MCF 10A (cell line): ENCODE measurements at regions of chr4 and their contacts with region 1.

Region 1: GRCh38 chr4:77385124-77385969 is 220.3 kb upstream of the CXCL13 start:
- DNase-seq: peak; percentile 77
- H3K4me3 Mint-ChIP-seq: no peak overlapping the region
- H3K27ac Mint-ChIP-seq: no peak overlapping the region
- H3K4me1 Mint-ChIP-seq: no peaks in the 10 kb centered on the region
- H3K27me3 Mint-ChIP-seq: peaks cover 11% of the 10 kb centered on the region
- CTCF ChIP-seq: peak; percentile 74

Region 2: DNA sequence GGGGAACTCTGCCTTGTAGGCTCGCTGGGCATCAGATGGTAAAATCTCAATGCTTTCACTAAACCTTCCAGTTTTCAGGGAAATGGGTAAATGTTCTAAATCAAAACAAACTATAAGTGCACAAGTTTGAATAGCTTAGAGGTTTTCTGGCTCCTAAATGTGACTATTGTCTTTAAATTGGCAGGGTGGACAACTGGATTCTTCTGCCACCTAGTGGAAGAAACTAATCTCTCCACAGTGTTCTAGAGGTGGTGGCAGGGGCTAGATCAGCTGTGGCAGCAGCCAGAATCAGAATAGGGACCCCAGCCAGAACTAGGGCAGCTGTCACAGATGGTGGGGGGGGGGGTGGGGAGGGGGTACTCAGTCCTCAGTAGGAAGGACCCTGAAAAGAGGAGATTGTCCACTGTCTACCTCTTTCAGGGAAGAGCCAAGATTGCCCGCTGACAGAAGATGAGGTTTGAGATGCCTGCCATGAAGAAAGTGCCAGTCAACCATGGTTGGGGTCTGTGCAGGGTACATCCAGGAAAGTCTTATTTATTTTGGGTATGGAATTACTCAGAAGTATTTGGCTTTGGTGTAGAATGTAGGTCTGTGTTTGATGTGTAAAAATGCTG is 26.9 kb before region 1 on chr4:
- CTCF ChIA-PET with region 1: interaction called, 10 read pairs
- POLR2A ChIA-PET with region 1: no interaction called
- intact Hi-C with region 1: no loop called
- DNase-seq: peak; percentile 59
- H3K4me3 Mint-ChIP-seq: no peak overlapping the region
- H3K27ac Mint-ChIP-seq: no peak overlapping the region
- H3K4me1 Mint-ChIP-seq: peaks cover 6% of the 10 kb centered on the region
- H3K27me3 Mint-ChIP-seq: no peaks in the 10 kb centered on the region
- CTCF ChIP-seq: peak; percentile 64

Region 3: GRCh38 chr4:77395481-77395880 is 10.1 kb after region 1 on chr4:
- CTCF ChIA-PET with region 1: interaction called, 23 read pairs
- POLR2A ChIA-PET with region 1: no interaction called
- intact Hi-C with region 1: no loop called
- DNase-seq: no peak
- H3K4me3 Mint-ChIP-seq: no peak overlapping the region
- H3K27ac Mint-ChIP-seq: no peak overlapping the region
- H3K4me1 Mint-ChIP-seq: no peaks in the 10 kb centered on the region
- H3K27me3 Mint-ChIP-seq: no peaks in the 10 kb centered on the region
- CTCF ChIP-seq: no peak

Region 4: GRCh38 chr4:77433418-77433733 is 48.0 kb after region 1 on chr4:
- CTCF ChIA-PET with region 1: interaction called, 91 read pairs
- POLR2A ChIA-PET with region 1: no interaction called
- intact Hi-C with region 1: loop called (anchors 1 kb)
- DNase-seq: peak; percentile 72
- H3K4me3 Mint-ChIP-seq: no peak overlapping the region
- H3K27ac Mint-ChIP-seq: no peak overlapping the region
- H3K4me1 Mint-ChIP-seq: no peaks in the 10 kb centered on the region
- H3K27me3 Mint-ChIP-seq: no peaks in the 10 kb centered on the region
- CTCF ChIP-seq: peak; percentile 64

Region 5: GRCh38 chr4:77613267-77613666 is 227.9 kb after region 1 on chr4:
- CTCF ChIA-PET with region 1: interaction called, 108 read pairs
- POLR2A ChIA-PET with region 1: no interaction called
- intact Hi-C with region 1: loop called (anchors 1 kb)
- DNase-seq: no peak
- H3K4me3 Mint-ChIP-seq: no peak overlapping the region
- H3K27ac Mint-ChIP-seq: no peak overlapping the region
- H3K4me1 Mint-ChIP-seq: peaks cover 5% of the 10 kb centered on the region
- H3K27me3 Mint-ChIP-seq: peaks cover 13% of the 10 kb centered on the region
- CTCF ChIP-seq: no peak